ENCODE measurements at regions of chr10 and their contacts with region 1.

Region 1: GRCh38 chr10:62268399-62269114 is at the start of gene RTKN2:
- DNase-seq: peak; percentile 81
- ATAC-seq: peak; percentile 90
- H3K4me3 ChIP-seq: peak within 1 kb of the TSS; percentile 51 to 73 (median 68)
- H3K4me3 Mint-ChIP-seq: peak within 1 kb of the TSS; percentile 92
- H3K27ac ChIP-seq: peak within 1 kb of the TSS in 1 of 2 donors; percentile 25
- H3K27ac Mint-ChIP-seq: no peak within 1 kb of the TSS
- H3K4me1 ChIP-seq: peaks cover 14 to 15% of the 10 kb centered on the region in 2 donors
- H3K4me1 Mint-ChIP-seq: peaks cover 11% of the 10 kb centered on the region
- H3K27me3 ChIP-seq: peaks cover 0 to 17% (median 9%) of the 10 kb centered on the region in 4 experiments
- H3K27me3 Mint-ChIP-seq: peaks cover 14% of the 10 kb centered on the region
- CTCF ChIP-seq: no peak
- total RNA-seq, gene RTKN2: 0.22 and 0.53 TPM in 2 replicates

Region 2: GRCh38 chr10:62095181-62096071 is 173.1 kb before region 1 on chr10:
- CTCF ChIA-PET with region 1: no interaction called
- POLR2A ChIA-PET with region 1: no interaction called
- intact Hi-C with region 1: no loop called
- DNase-seq: no peak
- ATAC-seq: no peak
- H3K4me3 ChIP-seq: no peak overlapping the region
- H3K4me3 Mint-ChIP-seq: no peak overlapping the region
- H3K27ac ChIP-seq: no peak overlapping the region
- H3K27ac Mint-ChIP-seq: peak overlapping the region; percentile 66
- H3K4me1 ChIP-seq: peaks cover 0 to 3% of the 10 kb centered on the region in 2 donors
- H3K4me1 Mint-ChIP-seq: peaks cover 23% of the 10 kb centered on the region
- H3K27me3 ChIP-seq: no peaks in the 10 kb centered on the region
- H3K27me3 Mint-ChIP-seq: no peaks in the 10 kb centered on the region
- CTCF ChIP-seq: no peak

Region 3: DNA sequence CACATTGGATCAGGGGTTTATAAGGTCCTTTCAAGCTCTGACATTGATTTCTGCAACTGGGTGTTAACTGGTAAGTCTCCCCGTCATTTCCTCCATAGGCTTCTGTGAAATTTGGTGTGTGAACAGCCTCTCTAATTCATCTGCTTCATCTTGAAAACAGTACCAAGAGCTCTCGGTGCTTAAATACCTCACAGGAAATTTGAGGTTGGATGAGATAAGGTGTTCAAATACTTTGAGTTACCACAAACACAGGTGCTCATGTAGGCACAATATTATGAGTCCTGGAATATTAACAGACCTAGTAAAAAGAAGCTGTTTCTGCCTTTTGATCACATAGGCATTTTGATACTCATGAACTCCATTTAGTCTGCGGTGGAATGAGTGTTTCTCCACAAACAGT is 85.1 kb before region 1 on chr10:
- CTCF ChIA-PET with region 1: no interaction called
- POLR2A ChIA-PET with region 1: no interaction called
- intact Hi-C with region 1: no loop called
- DNase-seq: no peak
- ATAC-seq: no peak
- H3K4me3 ChIP-seq: no peak overlapping the region
- H3K4me3 Mint-ChIP-seq: no peak overlapping the region
- H3K27ac ChIP-seq: peak overlapping the region in 1 of 2 donors; percentile 11
- H3K27ac Mint-ChIP-seq: no peak overlapping the region
- H3K4me1 ChIP-seq: peaks cover 6 to 9% of the 10 kb centered on the region in 2 donors
- H3K4me1 Mint-ChIP-seq: peaks cover 25% of the 10 kb centered on the region
- H3K27me3 ChIP-seq: no peaks in the 10 kb centered on the region
- H3K27me3 Mint-ChIP-seq: no peaks in the 10 kb centered on the region
- CTCF ChIP-seq: no peak

Region 4: DNA sequence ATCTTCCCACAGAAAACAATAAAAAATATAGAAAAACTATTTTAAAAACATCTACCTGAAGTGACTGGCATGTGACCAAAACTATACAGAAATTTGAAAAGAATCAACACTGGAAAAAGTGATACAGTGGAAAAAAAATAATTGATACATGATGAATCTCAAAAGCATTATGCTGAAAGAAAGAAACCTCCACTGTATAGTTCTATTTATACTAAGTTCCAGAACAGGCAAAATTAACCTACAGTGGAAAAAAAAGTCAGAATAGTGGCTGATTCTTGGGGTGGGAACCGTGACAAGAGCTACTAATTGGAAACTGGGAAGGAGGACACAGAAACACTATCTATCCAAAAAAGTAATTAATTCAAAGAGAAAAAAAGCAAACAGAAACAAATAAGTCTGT is 14.9 kb before region 1 on chr10:
- CTCF ChIA-PET with region 1: interaction called, 11 read pairs
- POLR2A ChIA-PET with region 1: no interaction called
- intact Hi-C with region 1: no loop called
- DNase-seq: no peak
- ATAC-seq: no peak
- H3K4me3 ChIP-seq: no peak overlapping the region
- H3K4me3 Mint-ChIP-seq: no peak overlapping the region
- H3K27ac ChIP-seq: no peak overlapping the region
- H3K27ac Mint-ChIP-seq: no peak overlapping the region
- H3K4me1 ChIP-seq: no peaks in the 10 kb centered on the region
- H3K4me1 Mint-ChIP-seq: no peaks in the 10 kb centered on the region
- H3K27me3 ChIP-seq: no peaks in the 10 kb centered on the region
- H3K27me3 Mint-ChIP-seq: no peaks in the 10 kb centered on the region
- CTCF ChIP-seq: no peak

Region 5: GRCh38 chr10:62373995-62374861 is 105.7 kb after region 1 on chr10 and contains the start of gene ZNF365:
- CTCF ChIA-PET with region 1: no interaction called
- POLR2A ChIA-PET with region 1: no interaction called
- intact Hi-C with region 1: loop called (anchors 10 kb)
- DNase-seq: peak; percentile 57
- ATAC-seq: peak; percentile 72
- H3K4me3 ChIP-seq: peak within 1 kb of the TSS in 4 of 5 experiments; percentile 29 to 67 (median 48)
- H3K4me3 Mint-ChIP-seq: peak within 1 kb of the TSS; percentile 87
- H3K27ac ChIP-seq: no peak within 1 kb of the TSS
- H3K27ac Mint-ChIP-seq: no peak within 1 kb of the TSS
- H3K4me1 ChIP-seq: peaks cover 12% of the 10 kb centered on the region in 2 donors
- H3K4me1 Mint-ChIP-seq: peaks cover 11% of the 10 kb centered on the region
- H3K27me3 ChIP-seq: peaks cover 0 to 15% (median 9%) of the 10 kb centered on the region in 4 experiments
- H3K27me3 Mint-ChIP-seq: peaks cover 27% of the 10 kb centered on the region
- CTCF ChIP-seq: no peak
- total RNA-seq, gene ZNF365: 0.17 and 0.34 TPM in 2 replicates

Region 6: DNA sequence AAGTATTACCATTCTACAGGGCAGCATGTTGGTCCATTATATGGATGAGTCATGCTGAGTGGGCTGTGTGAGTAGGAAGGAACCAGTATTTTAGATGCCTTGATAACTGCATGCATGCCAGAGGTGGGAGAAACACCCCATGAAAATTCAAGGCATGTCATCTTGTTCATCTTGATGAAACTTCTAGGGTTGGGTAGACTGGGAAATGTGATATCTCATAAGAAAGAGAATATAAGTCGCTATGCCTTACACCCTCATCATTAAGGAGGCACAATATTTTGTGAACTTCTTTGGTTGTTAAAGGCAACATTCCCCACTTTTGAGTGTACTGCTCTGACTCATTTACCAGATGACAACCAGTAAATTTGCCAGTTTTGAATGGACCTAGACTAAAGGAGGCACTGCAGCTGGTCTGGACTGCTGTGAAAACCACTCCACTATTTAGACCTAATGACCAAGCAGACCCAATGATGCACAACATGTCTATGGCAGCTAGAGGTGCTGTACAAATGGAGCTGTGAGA is 153.6 kb after region 1 on chr10:
- CTCF ChIA-PET with region 1: interaction called, 9 read pairs
- POLR2A ChIA-PET with region 1: no interaction called
- intact Hi-C with region 1: loop called (anchors 5 kb)
- DNase-seq: no peak
- ATAC-seq: no peak
- H3K4me3 ChIP-seq: no peak overlapping the region
- H3K4me3 Mint-ChIP-seq: no peak overlapping the region
- H3K27ac ChIP-seq: no peak overlapping the region
- H3K27ac Mint-ChIP-seq: no peak overlapping the region
- H3K4me1 ChIP-seq: no peaks in the 10 kb centered on the region
- H3K4me1 Mint-ChIP-seq: no peaks in the 10 kb centered on the region
- H3K27me3 ChIP-seq: peaks cover 0 to 5% (median 2%) of the 10 kb centered on the region in 4 experiments
- H3K27me3 Mint-ChIP-seq: peaks cover 22% of the 10 kb centered on the region
- CTCF ChIP-seq: no peak

Region 7: DNA sequence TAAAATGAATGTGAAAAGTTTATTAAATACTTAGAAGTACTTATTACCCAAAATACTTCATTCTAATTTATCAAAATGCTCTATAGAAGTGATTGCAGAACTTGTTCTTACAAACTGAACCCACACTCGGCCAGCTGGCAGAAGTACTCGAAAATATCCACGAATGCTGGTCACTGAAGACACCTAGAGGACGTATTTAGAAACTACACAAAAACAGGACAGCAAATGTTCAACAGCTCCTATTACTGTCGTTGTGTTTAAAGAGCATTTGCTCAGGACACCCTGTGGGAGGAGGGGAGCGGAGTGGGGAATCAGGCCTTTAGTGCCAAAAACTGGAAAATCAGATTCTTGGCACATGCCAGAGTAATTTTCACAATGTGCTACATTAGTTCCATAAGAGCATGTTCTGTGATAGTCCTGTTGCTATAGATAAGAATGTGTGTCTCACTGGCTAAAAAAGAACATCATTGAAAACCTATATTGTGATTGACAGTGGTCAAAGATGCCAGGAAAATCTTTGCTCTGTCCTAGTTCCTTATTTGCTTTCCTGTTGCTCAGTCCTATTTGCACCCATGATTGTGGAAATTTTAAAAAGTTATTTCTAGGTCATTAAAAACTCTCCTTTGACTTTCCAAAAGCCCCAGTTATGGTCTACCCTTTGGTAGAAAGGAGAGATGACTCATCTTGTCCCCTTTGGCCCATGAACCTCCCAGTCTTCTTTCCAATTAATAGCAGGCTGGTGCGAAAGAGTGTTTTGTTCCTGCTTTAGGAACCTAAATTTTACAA is 815.5 kb after region 1 on chr10:
- CTCF ChIA-PET with region 1: interaction called, 28 read pairs
- POLR2A ChIA-PET with region 1: no interaction called
- intact Hi-C with region 1: loop called (anchors 2 kb)
- DNase-seq: peak; percentile 75
- ATAC-seq: peak; percentile 86
- H3K4me3 ChIP-seq: no peak overlapping the region
- H3K4me3 Mint-ChIP-seq: no peak overlapping the region
- H3K27ac ChIP-seq: no peak overlapping the region
- H3K27ac Mint-ChIP-seq: no peak overlapping the region
- H3K4me1 ChIP-seq: no peaks in the 10 kb centered on the region
- H3K4me1 Mint-ChIP-seq: no peaks in the 10 kb centered on the region
- H3K27me3 ChIP-seq: no peaks in the 10 kb centered on the region
- H3K27me3 Mint-ChIP-seq: peaks cover 10% of the 10 kb centered on the region
- CTCF ChIP-seq: peak; percentile 82

Measured in B cell (primary cell).